Gastrocnemius medialis (tissue), 4 donors: ENCODE measurements at regions of chr5 and their contacts with region 1.

Region 1: GRCh38 chr5:151051066-151051930 is 29.5 kb downstream of the TNIP1 start:
- DNase-seq: peak; percentile 69 to 83
- ATAC-seq: peak; percentile 83
- H3K4me3 ChIP-seq: no peak overlapping the region
- H3K27ac ChIP-seq: peak overlapping the region; percentile 56 to 73 (median 67)
- H3K4me1 ChIP-seq: peaks cover 8 to 10% of the 10 kb centered on the region in 2 donors
- H3K27me3 ChIP-seq: no peaks in the 10 kb centered on the region
- CTCF ChIP-seq: peak; percentile 88 to 96 (median 95)
- POLR2A ChIP-seq: no peak

Region 2: DNA sequence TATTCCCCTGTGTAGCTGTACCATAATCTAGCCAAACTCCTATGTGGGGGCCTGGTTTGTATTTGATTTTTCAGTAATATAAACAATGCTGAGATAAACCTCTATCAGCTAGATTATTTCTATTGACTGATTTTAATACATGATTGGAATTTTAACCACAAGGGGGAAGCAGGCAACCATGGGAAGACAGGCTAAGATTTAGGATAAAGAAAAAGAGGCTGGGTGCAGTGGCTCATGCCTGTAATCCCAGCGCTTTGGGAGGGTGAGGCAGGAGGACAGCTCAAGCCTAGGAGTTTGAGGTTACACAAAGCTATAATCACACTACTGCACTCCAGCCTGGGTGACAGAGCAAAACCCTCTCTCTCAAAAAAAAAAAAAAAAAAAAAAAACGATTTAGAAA is 49.0 kb before region 1 on chr5:
- in situ Hi-C with region 1: loop called in 2 of 4 experiments (anchors 5 kb)
- intact Hi-C with region 1: loop called (anchors 1 kb)
- DNase-seq: peak in 1 of 2 donors; percentile 34
- ATAC-seq: peak in 1 of 2 donors; percentile 35
- H3K4me3 ChIP-seq: no peak overlapping the region
- H3K27ac ChIP-seq: no peak overlapping the region
- H3K4me1 ChIP-seq: peaks cover 32 to 41% of the 10 kb centered on the region in 2 donors
- H3K27me3 ChIP-seq: no peaks in the 10 kb centered on the region
- CTCF ChIP-seq: peak; percentile 67 to 81 (median 73)
- POLR2A ChIP-seq: no peak

Region 3: DNA sequence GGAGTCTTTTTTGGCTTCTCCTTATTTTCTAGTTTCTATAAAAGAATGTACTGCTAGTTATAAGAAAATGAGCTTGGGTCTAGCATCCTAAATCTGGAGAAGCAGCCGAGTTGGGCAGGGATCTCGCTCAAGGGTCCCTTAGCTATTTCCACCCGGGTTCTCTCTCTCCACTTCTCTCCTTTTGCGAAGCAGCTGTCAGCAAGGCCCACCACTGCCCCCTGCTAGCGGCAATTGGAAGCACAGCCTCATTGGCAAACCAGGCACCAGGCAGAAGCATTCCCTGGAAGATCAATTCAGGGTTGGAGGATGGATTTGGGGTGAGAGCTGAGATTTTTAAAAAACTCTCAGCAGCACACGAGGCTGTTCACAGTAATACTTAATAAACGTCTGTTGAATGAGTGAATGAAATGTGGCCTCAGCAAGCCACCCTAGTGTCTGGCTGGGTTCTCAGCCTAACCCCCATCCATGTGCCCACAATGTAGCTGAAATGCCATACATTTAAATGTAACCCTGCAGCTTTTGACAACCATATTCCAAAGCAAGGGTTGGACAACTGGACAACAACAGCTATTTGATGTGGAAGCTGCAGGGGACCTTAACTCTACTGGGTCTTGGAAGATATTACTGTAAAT is 64.1 kb after region 1 on chr5:
- in situ Hi-C with region 1: loop called (anchors 5 kb)
- intact Hi-C with region 1: loop called (anchors 1 kb)
- DNase-seq: peak; percentile 50 to 71
- ATAC-seq: peak; percentile 54 to 59
- H3K4me3 ChIP-seq: no peak overlapping the region
- H3K27ac ChIP-seq: peak overlapping the region; percentile 10 to 32 (median 28)
- H3K4me1 ChIP-seq: peaks cover 15 to 20% of the 10 kb centered on the region in 2 donors
- H3K27me3 ChIP-seq: no peaks in the 10 kb centered on the region
- CTCF ChIP-seq: peak; percentile 95 to 99 (median 96)
- POLR2A ChIP-seq: no peak

Region 4: GRCh38 chr5:151252762-151253604 is 201.7 kb after region 1 on chr5 and contains the start of gene GM2A:
- in situ Hi-C with region 1: no loop called
- intact Hi-C with region 1: loop called (anchors 5 kb)
- DNase-seq: peak; percentile 99 to 100
- ATAC-seq: peak; percentile 96 to 97
- H3K4me3 ChIP-seq: peak within 1 kb of the TSS; percentile 71 to 94 (median 81)
- H3K27ac ChIP-seq: peak within 1 kb of the TSS; percentile 87 to 97 (median 90)
- H3K4me1 ChIP-seq: peaks cover 22 to 27% of the 10 kb centered on the region in 2 donors
- H3K27me3 ChIP-seq: no peaks in the 10 kb centered on the region
- CTCF ChIP-seq: no peak
- POLR2A ChIP-seq: peak; percentile 68 to 91
- total RNA-seq, gene GM2A: 5.0 to 7.2 (median 5.7) TPM